ENCODE measurements at regions of chr18 and their contacts with region 1.

Region 1: DNA sequence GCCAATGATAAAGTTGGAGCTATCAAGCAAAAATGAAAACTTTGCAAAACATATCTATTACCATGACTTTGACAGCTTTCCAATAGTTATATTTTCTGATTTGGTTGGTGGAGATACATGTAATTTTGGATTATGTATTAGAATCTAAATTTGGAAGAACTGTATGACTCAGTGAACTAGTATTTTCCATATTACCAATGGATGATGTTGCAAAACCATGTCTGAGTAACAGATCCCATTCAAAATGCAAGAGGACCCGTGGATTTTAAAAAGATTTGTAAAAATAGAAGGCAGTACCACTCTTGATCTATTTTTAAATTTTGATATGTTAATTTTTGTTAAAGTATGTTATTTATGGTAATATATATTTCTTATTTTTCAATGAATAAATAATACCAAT is 83.0 kb downstream of the TAF4B start:
- DNase-seq: no peak
- ATAC-seq: no peak
- H3K4me3 ChIP-seq: no peak overlapping the region
- H3K4me3 Mint-ChIP-seq: no peak overlapping the region
- H3K27ac ChIP-seq: no peak overlapping the region
- H3K27ac Mint-ChIP-seq: no peak overlapping the region
- H3K4me1 ChIP-seq: no peaks in the 10 kb centered on the region
- H3K4me1 Mint-ChIP-seq: no peaks in the 10 kb centered on the region
- H3K27me3 ChIP-seq: no peaks in the 10 kb centered on the region
- H3K27me3 Mint-ChIP-seq: no peaks in the 10 kb centered on the region
- CTCF ChIP-seq: no peak

Region 2: DNA sequence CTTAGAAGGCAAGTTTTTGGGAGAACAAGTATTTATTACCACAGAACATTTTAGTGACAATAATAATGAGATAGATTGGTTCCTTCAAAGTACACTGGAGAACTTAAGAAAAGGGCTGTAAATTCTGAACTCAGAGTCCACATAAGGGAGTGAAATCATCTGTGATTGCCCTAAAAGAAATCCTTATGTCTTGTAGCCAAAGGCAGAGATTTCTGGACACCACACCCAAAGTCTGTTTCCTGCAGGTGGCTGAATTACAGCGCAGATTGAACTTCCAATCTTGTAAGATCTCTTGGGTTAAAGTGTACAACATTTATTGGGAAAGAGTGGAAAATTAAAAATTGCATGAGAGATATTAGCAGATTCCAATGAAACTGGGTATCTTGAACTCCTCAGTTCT is 60.8 kb after region 1 on chr18:
- CTCF ChIA-PET with region 1: no interaction called
- POLR2A ChIA-PET with region 1: no interaction called
- intact Hi-C with region 1: no loop called
- DNase-seq: no peak
- ATAC-seq: no peak
- H3K4me3 ChIP-seq: no peak overlapping the region
- H3K4me3 Mint-ChIP-seq: no peak overlapping the region
- H3K27ac ChIP-seq: no peak overlapping the region
- H3K27ac Mint-ChIP-seq: no peak overlapping the region
- H3K4me1 ChIP-seq: no peaks in the 10 kb centered on the region
- H3K4me1 Mint-ChIP-seq: no peaks in the 10 kb centered on the region
- H3K27me3 ChIP-seq: no peaks in the 10 kb centered on the region
- H3K27me3 Mint-ChIP-seq: no peaks in the 10 kb centered on the region
- CTCF ChIP-seq: no peak

Region 3: DNA sequence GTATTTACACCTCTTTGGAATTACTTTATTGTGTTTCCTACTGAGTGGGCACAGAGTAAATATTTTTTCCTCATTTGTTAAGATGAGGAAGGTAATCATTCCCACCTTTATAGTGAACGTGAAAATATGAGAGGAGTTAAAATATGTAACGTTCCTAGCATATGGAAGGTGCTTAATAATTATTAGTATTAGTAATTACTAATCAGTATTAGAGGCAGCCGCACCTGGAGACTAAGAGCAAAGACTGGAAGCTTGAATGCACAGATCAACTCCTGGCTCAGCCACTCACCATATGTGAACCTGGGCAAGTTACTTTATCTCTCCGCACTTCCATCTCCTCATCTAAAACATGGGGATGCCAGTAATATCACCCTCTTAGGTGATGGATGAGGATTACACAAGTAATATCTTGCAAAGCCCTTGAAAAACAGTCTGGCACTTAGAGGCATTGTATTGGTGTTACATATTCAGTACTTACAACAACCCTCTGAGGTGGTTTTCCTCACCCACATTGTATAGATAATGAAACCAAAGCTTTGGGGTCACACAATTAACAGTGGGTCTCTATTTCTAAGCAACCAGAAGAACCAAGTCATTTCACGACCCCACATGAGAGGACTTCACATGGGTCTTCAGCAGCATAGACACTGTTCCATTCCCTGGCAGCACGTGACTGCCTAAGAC is 339.4 kb after region 1 on chr18:
- CTCF ChIA-PET with region 1: no interaction called
- POLR2A ChIA-PET with region 1: no interaction called
- intact Hi-C with region 1: loop called in 1 of 2 experiments (anchors 2 kb)
- DNase-seq: no peak
- ATAC-seq: no peak
- H3K4me3 ChIP-seq: no peak overlapping the region
- H3K4me3 Mint-ChIP-seq: no peak overlapping the region
- H3K27ac ChIP-seq: no peak overlapping the region
- H3K27ac Mint-ChIP-seq: no peak overlapping the region
- H3K4me1 ChIP-seq: no peaks in the 10 kb centered on the region
- H3K4me1 Mint-ChIP-seq: no peaks in the 10 kb centered on the region
- H3K27me3 ChIP-seq: peaks cover 6 to 7% of the 10 kb centered on the region in 2 experiments
- H3K27me3 Mint-ChIP-seq: peaks cover 39% of the 10 kb centered on the region
- CTCF ChIP-seq: no peak